Astrocyte of the spinal cord (primary cell): ENCODE measurements at regions of chr19 and their contacts with region 1.

Region 1: DNA sequence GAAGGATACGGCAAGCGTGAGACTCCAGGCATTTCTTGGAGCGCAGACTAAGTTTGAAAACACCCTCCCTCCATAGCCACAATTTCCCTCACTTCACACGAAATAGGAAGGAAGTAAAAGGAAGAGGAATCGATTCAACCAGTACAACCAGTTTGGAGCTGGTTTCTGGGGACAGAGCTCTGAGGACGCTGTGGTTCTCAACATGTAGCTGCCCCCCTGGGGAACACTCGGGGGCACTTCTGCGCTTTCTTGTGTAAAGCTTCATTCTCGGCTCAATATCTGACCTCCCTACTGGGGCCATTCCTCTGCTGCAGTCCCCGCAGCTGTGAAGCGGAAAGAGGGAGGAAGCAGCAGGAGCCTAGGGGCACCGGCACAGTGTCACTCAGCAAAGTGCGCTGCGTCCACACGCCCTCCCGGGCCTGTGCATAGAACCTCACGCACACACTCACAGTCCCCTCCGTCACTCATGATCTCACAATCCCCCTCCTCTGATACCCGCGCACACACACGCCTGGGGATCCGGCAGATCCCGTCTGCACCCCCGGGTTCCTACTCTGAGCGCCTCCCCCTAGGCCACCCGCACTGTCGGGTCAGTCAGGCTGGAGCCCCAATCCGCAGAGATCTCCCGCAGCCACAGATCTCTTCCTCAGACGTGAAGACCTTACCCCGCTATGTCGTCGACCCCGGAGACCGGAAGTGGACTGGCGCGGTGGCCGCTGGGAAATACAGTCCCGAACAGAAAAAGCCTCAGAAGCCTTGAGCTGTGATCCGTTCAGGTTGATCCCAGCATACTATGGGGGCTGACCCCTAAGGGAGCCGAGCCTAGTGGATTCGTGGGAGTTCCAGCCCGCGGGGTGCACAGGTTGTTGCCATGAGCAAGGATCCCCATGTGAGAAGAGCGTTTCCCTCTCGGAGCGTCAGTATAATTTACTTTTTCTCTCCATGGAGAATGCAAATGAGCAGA is at the start of gene ZNF780A:
- DNase-seq: peak; percentile 69
- H3K4me3 ChIP-seq: peak within 1 kb of the TSS; percentile 93
- CTCF ChIP-seq: no peak

Region 2: GRCh38 chr19:39873385-39873784 is 217.1 kb before region 1 on chr19:
- in situ Hi-C with region 1: no loop called
- DNase-seq: no peak
- H3K4me3 ChIP-seq: no peak overlapping the region
- CTCF ChIP-seq: no peak

Region 3: GRCh38 chr19:40055832-40056504 is 34.6 kb before region 1 on chr19 and contains the start of gene ZNF780B:
- in situ Hi-C with region 1: loop called (anchors 5 kb)
- DNase-seq: peak; percentile 56
- H3K4me3 ChIP-seq: peak within 1 kb of the TSS; percentile 92
- CTCF ChIP-seq: no peak